ENCODE measurements at regions of chr16 and their contacts with region 1.

Region 1: GRCh38 chr16:894841-895240 is 75.9 kb downstream of the LMF1 start:
- DNase-seq: peak in 5 of 42 donors; percentile 26 to 72 (median 56)

Region 2: DNA sequence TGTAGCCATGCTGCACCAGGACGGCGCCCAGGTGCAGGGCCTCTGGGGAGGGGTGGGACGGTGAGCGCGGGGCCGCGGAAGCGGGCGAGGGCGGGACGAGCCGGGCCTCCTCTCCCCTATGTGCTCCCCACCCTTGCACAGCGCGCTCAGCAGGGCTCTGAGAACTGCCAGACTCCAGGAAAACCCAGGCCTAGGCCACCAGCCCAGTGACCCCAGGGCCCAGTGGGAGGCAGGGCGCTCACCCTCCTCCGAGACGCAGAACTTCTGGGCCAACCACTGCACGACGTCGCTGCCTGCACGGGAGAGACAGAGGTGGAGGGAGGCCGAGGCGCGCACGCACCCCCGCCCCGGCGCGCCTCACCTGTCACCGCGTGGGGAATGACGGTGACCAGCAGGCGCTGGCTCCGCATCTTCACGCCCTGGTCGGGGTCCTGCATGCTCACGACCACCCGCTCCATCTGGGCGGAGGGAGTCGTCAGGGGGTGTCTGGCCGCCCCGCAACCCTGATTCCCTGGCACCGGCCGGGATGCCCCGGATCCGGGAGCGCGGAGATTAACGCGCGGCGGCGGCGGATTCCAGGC is 619.7 kb before region 1 on chr16:
- intact Hi-C with region 1: no loop called
- DNase-seq: peak in 41 of 42 donors; percentile 23 to 78 (median 56)

Region 3: GRCh38 chr16:788394-789126 is 106.3 kb before region 1 on chr16 and contains the start of gene CHTF18:
- intact Hi-C with region 1: no loop called
- DNase-seq: peak; percentile 66 to 97 (median 92)

Region 4: DNA sequence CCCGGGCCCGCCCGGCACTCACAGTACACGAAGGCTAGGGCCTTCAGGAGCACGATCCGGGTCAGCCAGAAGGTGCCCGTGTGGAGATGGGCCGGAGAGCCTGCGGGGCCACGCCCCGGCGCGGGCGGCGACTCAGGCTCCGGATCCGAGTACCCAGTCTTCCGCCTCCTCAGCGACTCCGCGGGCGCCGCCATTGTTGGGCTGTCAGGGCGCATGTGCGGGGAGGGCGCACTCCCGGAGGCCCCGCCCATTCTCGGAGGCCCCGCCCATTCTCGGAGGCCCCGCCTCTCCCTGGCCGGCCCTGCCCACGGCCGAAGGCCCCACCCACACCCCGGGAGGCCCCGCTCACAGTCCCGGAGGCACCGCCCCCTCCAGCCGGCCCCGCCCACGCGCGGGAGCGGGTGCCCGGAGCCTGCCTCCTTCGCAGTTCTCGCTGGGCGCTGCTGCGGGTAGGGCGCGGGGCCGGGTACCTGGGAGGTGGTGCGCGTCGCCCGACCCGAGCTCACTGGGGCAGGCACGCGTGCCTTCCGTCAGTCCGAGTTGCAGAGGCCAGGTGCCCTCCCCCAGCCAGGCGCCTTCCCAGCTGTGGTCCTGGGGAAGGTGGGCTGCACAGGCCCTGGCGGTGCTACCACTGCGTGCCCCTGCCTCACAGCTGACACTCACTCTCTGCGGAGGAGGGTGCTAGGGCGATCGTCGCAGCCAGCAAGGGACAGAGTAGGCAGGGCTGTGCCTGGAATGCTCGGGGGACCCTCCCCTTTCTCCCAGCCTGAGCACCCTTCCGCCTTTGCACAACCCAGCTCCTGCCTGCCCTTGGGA is 76.1 kb after region 1 on chr16 and contains the start of gene LMF1:
- intact Hi-C with region 1: loop called (anchors 5 kb)
- DNase-seq: peak; percentile 89 to 99 (median 98)

Measured in head of caudate nucleus (tissue), 42 donors.